ENCODE measurements at regions of chr10 and their contacts with region 1.

Region 1: DNA sequence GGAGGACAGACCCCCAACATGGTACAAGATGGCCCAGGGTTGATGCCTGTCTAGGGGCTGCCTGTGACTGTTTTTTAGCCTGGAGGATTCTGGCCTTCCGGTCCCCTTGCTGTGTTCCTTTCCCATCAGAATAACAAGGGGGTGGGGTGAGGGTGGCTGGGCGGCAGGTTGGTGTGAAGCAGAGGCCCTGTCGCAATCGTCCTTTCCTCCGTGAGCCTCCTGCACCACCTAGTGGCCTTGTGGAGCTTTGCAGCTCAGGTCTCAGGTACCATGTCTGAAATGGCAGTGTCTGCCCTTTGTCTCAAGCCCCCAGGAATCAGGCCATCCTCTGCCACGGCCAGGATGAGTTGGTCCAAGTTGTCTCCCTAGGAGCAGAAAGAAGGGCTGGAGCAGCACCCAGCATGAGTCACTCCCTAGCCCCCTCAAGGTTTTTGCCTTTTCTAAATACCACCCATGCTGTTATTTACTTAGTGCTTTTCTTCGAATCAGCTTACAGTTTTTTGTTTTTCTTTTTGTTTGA is 24.2 kb downstream of the TACR2 start:
- DNase-seq: peak; percentile 64 to 90 (median 81)
- ATAC-seq: peak; percentile 100
- H3K4me3 ChIP-seq: no peak overlapping the region
- H3K4me3 Mint-ChIP-seq: no peak overlapping the region
- H3K27ac ChIP-seq: peak overlapping the region in 1 of 2 experiments; percentile 24
- H3K27ac Mint-ChIP-seq: peak overlapping the region; percentile 62
- H3K4me1 ChIP-seq: peaks cover 5% of the 10 kb centered on the region
- H3K4me1 Mint-ChIP-seq: peaks cover 19% of the 10 kb centered on the region
- H3K27me3 ChIP-seq: no peaks in the 10 kb centered on the region
- H3K27me3 Mint-ChIP-seq: no peaks in the 10 kb centered on the region
- CTCF ChIP-seq: peak; percentile 87

Region 2: GRCh38 chr10:69004821-69005220 is 387.7 kb before region 1 on chr10:
- CTCF ChIA-PET with region 1: interaction called, 3 read pairs
- POLR2A ChIA-PET with region 1: no interaction called
- intact Hi-C with region 1: loop called in 1 of 2 experiments (anchors 2 kb)
- DNase-seq: peak in 2 of 9 experiments; percentile 61 to 74
- ATAC-seq: peak; percentile 87
- H3K4me3 ChIP-seq: no peak overlapping the region
- H3K4me3 Mint-ChIP-seq: no peak overlapping the region
- H3K27ac ChIP-seq: no peak overlapping the region
- H3K27ac Mint-ChIP-seq: no peak overlapping the region
- H3K4me1 ChIP-seq: no peaks in the 10 kb centered on the region
- H3K4me1 Mint-ChIP-seq: peaks cover 2% of the 10 kb centered on the region
- H3K27me3 ChIP-seq: no peaks in the 10 kb centered on the region
- H3K27me3 Mint-ChIP-seq: no peaks in the 10 kb centered on the region
- CTCF ChIP-seq: peak; percentile 76

Region 3: GRCh38 chr10:69237528-69238159 is 154.9 kb before region 1 on chr10:
- CTCF ChIA-PET with region 1: interaction called, 165 read pairs
- POLR2A ChIA-PET with region 1: interaction called, 3 read pairs
- intact Hi-C with region 1: loop called (anchors 1 kb)
- DNase-seq: peak; percentile 76 to 94 (median 85)
- ATAC-seq: peak; percentile 97
- H3K4me3 ChIP-seq: no peak overlapping the region
- H3K4me3 Mint-ChIP-seq: no peak overlapping the region
- H3K27ac ChIP-seq: no peak overlapping the region
- H3K27ac Mint-ChIP-seq: no peak overlapping the region
- H3K4me1 ChIP-seq: peaks cover 23% of the 10 kb centered on the region
- H3K4me1 Mint-ChIP-seq: peaks cover 19% of the 10 kb centered on the region
- H3K27me3 ChIP-seq: no peaks in the 10 kb centered on the region
- H3K27me3 Mint-ChIP-seq: no peaks in the 10 kb centered on the region
- CTCF ChIP-seq: peak; percentile 94

Region 4: GRCh38 chr10:69318106-69318866 is 74.3 kb before region 1 on chr10:
- CTCF ChIA-PET with region 1: interaction called, 11 read pairs
- POLR2A ChIA-PET with region 1: interaction called, 3 read pairs
- intact Hi-C with region 1: loop called (anchors 1 to 2 kb)
- DNase-seq: peak; percentile 81 to 96 (median 90)
- ATAC-seq: peak; percentile 89
- H3K4me3 ChIP-seq: peak overlapping the region; percentile 92 to 99
- H3K4me3 Mint-ChIP-seq: peak overlapping the region; percentile 95
- H3K27ac ChIP-seq: peak overlapping the region; percentile 89 to 92
- H3K27ac Mint-ChIP-seq: peak overlapping the region; percentile 89
- H3K4me1 ChIP-seq: peaks cover 32% of the 10 kb centered on the region
- H3K4me1 Mint-ChIP-seq: peaks cover 38% of the 10 kb centered on the region
- H3K27me3 ChIP-seq: no peaks in the 10 kb centered on the region
- H3K27me3 Mint-ChIP-seq: no peaks in the 10 kb centered on the region
- CTCF ChIP-seq: no peak

Region 5: DNA sequence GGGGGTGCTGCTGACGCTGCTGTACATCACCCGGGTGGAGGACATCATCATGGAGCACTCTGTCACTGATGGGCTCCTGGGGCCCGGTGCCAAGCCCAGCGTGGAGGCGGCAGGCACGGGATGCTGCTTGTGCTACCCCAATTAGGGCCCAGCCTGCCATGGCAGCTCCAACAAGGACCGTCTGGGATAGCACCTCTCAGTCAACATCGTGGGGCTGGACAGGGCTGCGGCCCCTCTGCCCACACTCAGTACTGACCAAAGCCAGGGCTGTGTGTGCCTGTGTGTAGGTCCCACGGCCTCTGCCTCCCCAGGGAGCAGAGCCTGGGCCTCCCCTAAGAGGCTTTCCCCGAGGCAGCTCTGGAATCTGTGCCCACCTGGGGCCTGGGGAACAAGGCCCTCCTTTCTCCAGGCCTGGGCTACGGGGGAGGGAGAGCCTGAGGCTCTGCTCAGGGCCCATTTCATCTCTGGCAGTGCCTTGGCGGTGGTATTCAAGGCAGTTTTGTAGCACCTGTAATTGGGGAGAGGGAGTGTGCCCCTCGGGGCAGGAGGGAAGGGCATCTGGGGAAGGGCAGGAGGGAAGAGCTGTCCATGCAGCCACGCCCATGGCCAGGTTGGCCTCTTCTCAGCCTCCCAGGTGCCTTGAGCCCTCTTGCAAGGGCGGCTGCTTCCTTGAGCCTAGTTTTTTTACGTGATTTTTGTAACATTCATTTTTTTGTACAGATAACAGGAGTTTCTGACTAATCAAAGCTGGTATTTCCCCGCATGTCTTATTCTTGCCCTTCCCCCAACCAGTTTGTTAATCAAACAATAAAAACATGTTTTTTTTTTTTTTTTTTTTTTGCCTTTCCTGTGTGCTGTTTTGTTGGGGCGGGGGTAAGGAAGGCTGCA is 114.5 kb after region 1 on chr10:
- CTCF ChIA-PET with region 1: interaction called, 4 read pairs
- POLR2A ChIA-PET with region 1: no interaction called
- intact Hi-C with region 1: loop called in 1 of 2 experiments (anchors 1 kb)
- DNase-seq: peak in 1 of 9 experiments; percentile 48
- ATAC-seq: peak; percentile 6
- H3K4me3 ChIP-seq: peak overlapping the region in 1 of 2 experiments; percentile 10
- H3K4me3 Mint-ChIP-seq: peak overlapping the region; percentile 71
- H3K27ac ChIP-seq: no peak overlapping the region
- H3K27ac Mint-ChIP-seq: peak overlapping the region; percentile 62
- H3K4me1 ChIP-seq: peaks cover 4% of the 10 kb centered on the region
- H3K4me1 Mint-ChIP-seq: peaks cover 10% of the 10 kb centered on the region
- H3K27me3 ChIP-seq: no peaks in the 10 kb centered on the region
- H3K27me3 Mint-ChIP-seq: no peaks in the 10 kb centered on the region
- CTCF ChIP-seq: no peak

Region 6: GRCh38 chr10:70169649-70170364 is 777.3 kb after region 1 on chr10:
- CTCF ChIA-PET with region 1: no interaction called
- POLR2A ChIA-PET with region 1: no interaction called
- intact Hi-C with region 1: no loop called
- DNase-seq: peak in 3 of 9 experiments; percentile 28 to 51 (median 29)
- ATAC-seq: peak; percentile 13
- H3K4me3 ChIP-seq: peak overlapping the region; percentile 65 to 90
- H3K4me3 Mint-ChIP-seq: peak overlapping the region; percentile 94
- H3K27ac ChIP-seq: peak overlapping the region; percentile 83 to 94
- H3K27ac Mint-ChIP-seq: peak overlapping the region; percentile 97
- H3K4me1 ChIP-seq: peaks cover 57% of the 10 kb centered on the region
- H3K4me1 Mint-ChIP-seq: peaks cover 60% of the 10 kb centered on the region
- H3K27me3 ChIP-seq: no peaks in the 10 kb centered on the region
- H3K27me3 Mint-ChIP-seq: no peaks in the 10 kb centered on the region
- CTCF ChIP-seq: no peak